ENCODE measurements at regions of chr1 and their contacts with region 1.

Region 1: DNA sequence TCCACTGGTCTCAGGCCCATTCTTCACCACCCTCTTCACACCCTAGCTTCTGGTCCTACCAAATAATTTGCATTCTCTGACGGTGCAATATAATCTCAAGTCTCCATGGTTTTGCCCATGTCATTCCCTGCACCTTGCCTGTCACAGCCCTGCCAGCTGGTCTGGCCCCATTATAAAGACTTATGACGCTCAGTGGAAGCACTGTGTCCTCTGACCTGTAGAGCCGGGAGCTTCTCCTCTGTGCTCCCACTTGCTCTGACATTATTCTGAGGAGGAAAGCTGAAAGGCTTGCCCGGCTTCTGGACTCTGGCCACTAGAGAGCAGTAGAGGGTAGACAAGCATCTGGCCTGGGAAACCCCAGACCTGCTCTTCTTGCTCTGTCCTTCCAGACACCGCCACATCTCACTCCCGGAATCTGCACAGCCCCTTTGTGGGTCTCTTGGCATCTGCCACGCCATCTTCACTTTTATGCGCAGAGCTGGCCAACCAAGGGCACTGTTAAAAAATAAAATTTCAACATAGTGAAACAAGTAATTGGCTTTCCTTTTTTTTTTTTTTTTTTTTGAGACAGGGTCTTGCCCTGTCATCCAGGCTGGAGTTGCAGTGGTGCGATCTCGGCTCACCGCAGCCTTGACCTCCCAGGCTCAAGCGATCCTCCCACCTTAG is 44.4 kb downstream of the NENF start:
- DNase-seq: peak; percentile 99
- ATAC-seq: peak; percentile 96
- H3K4me3 ChIP-seq: no peak overlapping the region
- H3K27ac ChIP-seq: 0 out of 2 replicates have a peak overlapping the region, but pooled peaks have one; percentile 3
- H3K4me1 ChIP-seq: peaks cover 19% of the 10 kb centered on the region
- H3K27me3 ChIP-seq: no peaks in the 10 kb centered on the region
- CTCF ChIP-seq: peak; percentile 99

Region 2: GRCh38 chr1:212558693-212559480 is 81.7 kb after region 1 on chr1:
- CTCF ChIA-PET with region 1: interaction called, 3 read pairs
- POLR2A ChIA-PET with region 1: no interaction called
- intact Hi-C with region 1: loop called (anchors 2 kb)
- DNase-seq: peak; percentile 99
- ATAC-seq: peak; percentile 69
- H3K4me3 ChIP-seq: peak overlapping the region; percentile 76
- H3K27ac ChIP-seq: peak overlapping the region; percentile 66
- H3K4me1 ChIP-seq: peaks cover 37% of the 10 kb centered on the region
- H3K27me3 ChIP-seq: no peaks in the 10 kb centered on the region
- CTCF ChIP-seq: peak; percentile 35; the same call in 1 of the 2 replicates

Region 3: GRCh38 chr1:212595787-212596714 is 118.9 kb after region 1 on chr1:
- CTCF ChIA-PET with region 1: interaction called, 7 read pairs
- POLR2A ChIA-PET with region 1: interaction called, 5 read pairs
- intact Hi-C with region 1: loop called (anchors 1 kb)
- DNase-seq: peak; percentile 100
- ATAC-seq: peak; percentile 89
- H3K4me3 ChIP-seq: peak overlapping the region; percentile 46
- H3K27ac ChIP-seq: peak overlapping the region; percentile 80
- H3K4me1 ChIP-seq: peaks cover 45% of the 10 kb centered on the region
- H3K27me3 ChIP-seq: no peaks in the 10 kb centered on the region
- CTCF ChIP-seq: peak; percentile 99

Region 4: DNA sequence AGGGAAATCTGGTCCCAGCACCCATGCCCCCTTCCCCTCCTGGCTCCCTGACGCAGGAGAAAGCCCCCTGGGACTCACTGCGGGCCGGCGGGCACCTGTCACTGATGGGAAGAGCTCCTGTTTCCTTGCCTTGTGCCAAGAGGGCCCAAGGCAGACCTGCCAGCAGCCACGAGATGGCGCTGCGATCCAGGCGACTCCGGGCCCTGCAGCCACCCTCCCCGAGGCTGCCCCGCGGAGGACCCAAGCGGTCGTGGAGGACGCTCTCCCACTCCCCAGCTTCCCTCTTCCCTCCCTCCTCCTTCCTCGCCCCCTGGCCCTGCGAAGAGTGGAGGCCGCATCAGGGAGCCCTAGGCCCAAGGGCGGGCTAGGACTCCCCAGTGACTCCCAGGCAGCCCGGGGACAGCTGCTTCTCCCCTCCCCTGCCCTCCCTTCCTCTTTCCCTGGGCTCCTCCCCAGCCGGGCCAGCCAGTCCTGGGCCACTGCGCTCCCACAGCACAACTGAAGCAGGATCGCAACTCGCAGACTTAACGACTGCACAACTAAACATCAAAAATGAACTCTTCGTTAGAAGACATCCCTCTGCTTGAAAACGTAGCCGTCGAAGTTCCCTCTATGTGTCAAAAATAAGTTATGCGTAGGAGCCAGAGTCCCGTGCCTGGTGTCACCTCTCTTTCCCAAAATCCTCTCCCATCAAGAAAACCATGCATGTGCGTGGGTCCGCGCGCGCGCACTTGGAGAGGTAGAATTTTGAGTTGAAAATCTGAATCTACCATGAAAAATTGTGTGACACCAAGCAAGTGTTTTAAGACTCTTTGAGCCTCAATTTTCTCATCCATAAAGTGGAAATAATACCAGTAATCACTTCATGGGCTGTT is 188.3 kb after region 1 on chr1:
- CTCF ChIA-PET with region 1: interaction called, 20 read pairs
- POLR2A ChIA-PET with region 1: no interaction called
- intact Hi-C with region 1: loop called (anchors 1 kb)
- DNase-seq: peak; percentile 95
- ATAC-seq: peak; percentile 88
- H3K4me3 ChIP-seq: peak overlapping the region; percentile 72
- H3K27ac ChIP-seq: no peak overlapping the region; the same call in 1 of the 2 replicates
- H3K4me1 ChIP-seq: peaks cover 35% of the 10 kb centered on the region
- H3K27me3 ChIP-seq: no peaks in the 10 kb centered on the region
- CTCF ChIP-seq: peak; percentile 99

Region 5: GRCh38 chr1:212721388-212722247 is 244.5 kb after region 1 on chr1:
- CTCF ChIA-PET with region 1: interaction called, 4 read pairs
- POLR2A ChIA-PET with region 1: no interaction called
- intact Hi-C with region 1: loop called (anchors 1 kb)
- DNase-seq: peak; percentile 99
- ATAC-seq: peak; percentile 97
- H3K4me3 ChIP-seq: peak overlapping the region; percentile 47
- H3K27ac ChIP-seq: peak overlapping the region; percentile 68
- H3K4me1 ChIP-seq: peaks cover 17% of the 10 kb centered on the region
- H3K27me3 ChIP-seq: no peaks in the 10 kb centered on the region
- CTCF ChIP-seq: no peak; the same call in 1 of the 2 replicates

Region 6: GRCh38 chr1:212990276-212990675 is 513.1 kb after region 1 on chr1:
- CTCF ChIA-PET with region 1: no interaction called
- POLR2A ChIA-PET with region 1: no interaction called
- intact Hi-C with region 1: loop called (anchors 10 kb)
- DNase-seq: no peak
- ATAC-seq: no peak
- H3K4me3 ChIP-seq: no peak overlapping the region
- H3K27ac ChIP-seq: no peak overlapping the region
- H3K4me1 ChIP-seq: peaks cover 12% of the 10 kb centered on the region
- H3K27me3 ChIP-seq: no peaks in the 10 kb centered on the region
- CTCF ChIP-seq: no peak

Region 7: DNA sequence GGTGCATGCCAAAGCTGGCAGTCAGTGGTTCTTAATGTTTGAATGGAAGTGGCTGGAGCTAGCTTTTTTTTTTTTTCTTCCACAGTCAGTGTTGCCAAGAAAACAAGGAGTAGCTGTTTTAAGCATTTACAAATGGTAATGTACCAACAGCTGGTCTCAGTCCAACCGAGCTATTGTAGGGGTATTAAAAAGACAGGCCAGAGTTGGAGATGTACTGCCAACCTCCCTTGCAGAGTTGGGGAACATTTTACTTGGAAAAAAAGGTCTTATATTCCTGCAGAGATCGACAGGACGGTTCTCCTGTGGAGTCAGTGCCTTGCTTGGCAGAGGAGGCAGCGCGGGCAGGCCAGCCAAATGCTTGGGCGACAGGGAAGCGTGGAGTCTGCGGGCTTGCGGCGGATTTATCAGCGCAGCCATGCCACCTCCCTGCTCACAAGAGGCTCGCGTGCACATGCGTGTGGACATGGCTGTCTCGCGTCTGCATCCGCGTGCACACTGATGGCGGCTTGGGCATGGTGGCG is 912.0 kb after region 1 on chr1:
- CTCF ChIA-PET with region 1: no interaction called
- POLR2A ChIA-PET with region 1: no interaction called
- intact Hi-C with region 1: no loop called
- DNase-seq: no peak
- ATAC-seq: no peak
- H3K4me3 ChIP-seq: no peak overlapping the region
- H3K27ac ChIP-seq: no peak overlapping the region
- H3K4me1 ChIP-seq: no peaks in the 10 kb centered on the region
- H3K27me3 ChIP-seq: peaks cover 89% of the 10 kb centered on the region
- CTCF ChIP-seq: no peak

Measured in PC-3 (cell line).